ENCODE measurements at regions of chr11 and their contacts with region 1.

Region 1: DNA sequence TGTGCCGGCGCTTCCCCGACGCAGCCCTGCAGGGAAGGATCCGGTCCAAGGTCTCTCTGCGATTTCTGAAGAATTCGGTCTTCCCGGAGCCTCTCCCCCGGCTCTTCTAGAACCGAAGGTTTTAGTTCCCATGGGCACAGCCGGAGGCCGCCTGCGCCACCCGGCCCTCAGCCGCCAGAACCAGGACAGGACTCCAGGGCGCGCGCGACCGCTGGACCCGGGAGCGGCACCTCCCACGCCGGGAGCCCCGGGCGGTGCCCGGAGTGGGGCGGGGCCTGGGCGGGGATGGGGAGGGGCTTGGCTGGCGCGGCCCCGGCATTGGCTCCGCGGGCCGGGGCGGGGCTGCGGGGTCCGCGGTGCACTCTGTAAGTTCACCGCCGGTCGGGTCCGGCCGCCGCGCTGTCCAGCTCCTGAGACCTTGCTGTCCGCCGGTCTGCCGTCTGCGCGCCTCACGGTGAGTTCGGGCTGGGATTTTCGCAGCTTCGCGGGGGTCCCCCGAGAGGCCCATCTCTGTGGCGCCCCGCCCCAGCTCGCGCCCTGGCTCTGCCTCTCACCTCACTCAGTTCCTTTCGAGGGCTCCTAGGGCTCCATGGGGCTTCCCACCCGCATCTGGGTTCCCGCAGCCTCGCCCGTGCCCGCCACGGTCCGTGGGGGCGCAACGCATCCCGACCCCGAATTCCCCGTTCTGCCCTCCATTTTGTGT is at the start of gene CDC42EP2:
- DNase-seq: peak; percentile 63 to 76 (median 74)
- H3K4me3 ChIP-seq: peak within 1 kb of the TSS; percentile 82 to 98 (median 97)
- H3K4me3 Mint-ChIP-seq: peak within 1 kb of the TSS; percentile 86 to 92
- H3K27ac ChIP-seq: peak within 1 kb of the TSS; percentile 40 to 72
- H3K27ac Mint-ChIP-seq: peak within 1 kb of the TSS in 6 of 7 donors; percentile 53 to 89 (median 72)
- H3K4me1 ChIP-seq: peaks cover 37 to 71% of the 10 kb centered on the region in 2 donors
- H3K4me1 Mint-ChIP-seq: peaks cover 50% of the 10 kb centered on the region
- H3K27me3 ChIP-seq: peaks cover 2 to 11% of the 10 kb centered on the region in 2 donors
- H3K27me3 Mint-ChIP-seq: peaks cover 14 to 33% (median 26%) of the 10 kb centered on the region in 3 donors
- CTCF ChIP-seq: no peak
- polyA plus RNA-seq, gene CDC42EP2: 5.4 to 15.6 (median 10.1) TPM

Region 2: DNA sequence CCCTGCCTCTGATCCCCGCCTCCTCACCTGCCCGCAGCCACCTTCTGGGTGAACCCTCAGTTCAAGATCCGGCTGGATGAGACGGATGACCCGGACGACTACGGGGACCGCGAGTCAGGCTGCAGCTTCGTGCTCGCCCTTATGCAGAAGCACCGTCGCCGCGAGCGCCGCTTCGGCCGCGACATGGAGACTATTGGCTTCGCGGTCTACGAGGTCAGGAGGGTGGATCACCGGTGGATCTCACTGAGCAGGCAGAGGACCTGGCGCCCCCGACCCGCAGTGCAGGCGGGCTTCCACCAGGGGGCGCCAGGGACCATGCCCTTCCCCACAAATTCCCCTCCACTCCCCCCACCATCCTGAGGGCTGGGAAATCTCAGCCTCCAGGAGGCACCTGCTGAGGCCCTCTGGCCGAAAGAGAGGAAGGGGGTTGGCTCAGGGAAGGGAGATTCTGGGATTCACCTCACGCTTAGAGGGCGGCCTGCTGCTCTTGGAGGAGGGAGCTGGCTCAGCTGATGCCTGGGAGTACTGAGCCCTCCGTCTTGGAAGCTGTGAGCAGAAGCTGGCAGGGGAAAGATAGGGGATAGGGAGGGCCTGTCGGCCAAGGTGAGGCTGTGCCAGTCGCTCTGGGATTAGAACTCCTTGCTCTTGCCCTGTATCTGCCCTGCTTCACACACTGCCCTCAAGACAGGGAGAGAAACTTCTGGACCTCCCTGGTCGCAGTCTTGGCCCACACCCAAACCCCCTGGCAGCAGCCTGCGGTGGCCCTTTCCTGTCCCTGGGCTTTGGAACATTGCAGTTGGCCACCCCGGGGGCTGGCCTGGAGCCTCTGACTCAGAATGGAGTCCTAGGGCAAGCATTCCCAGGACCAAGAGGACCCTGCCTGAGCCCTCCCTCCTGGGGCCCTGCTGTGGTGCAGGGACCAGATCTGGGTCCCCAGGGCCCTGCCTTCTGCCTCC is 109.7 kb before region 1 on chr11:
- intact Hi-C with region 1: loop called in 1 of 2 experiments (anchors 10 kb)
- DNase-seq: peak in 2 of 3 donors; percentile 27 to 51
- H3K4me3 ChIP-seq: no peak overlapping the region
- H3K4me3 Mint-ChIP-seq: no peak overlapping the region
- H3K27ac ChIP-seq: peak overlapping the region in 1 of 2 donors; percentile 11
- H3K27ac Mint-ChIP-seq: peak overlapping the region in 4 of 7 donors; percentile 19 to 76 (median 60)
- H3K4me1 ChIP-seq: peaks cover 14 to 16% of the 10 kb centered on the region in 2 donors
- H3K4me1 Mint-ChIP-seq: peaks cover 18% of the 10 kb centered on the region
- H3K27me3 ChIP-seq: no peaks in the 10 kb centered on the region
- H3K27me3 Mint-ChIP-seq: no peaks in the 10 kb centered on the region
- CTCF ChIP-seq: peak; percentile 97

Region 3: GRCh38 chr11:65274735-65275682 is 39.6 kb before region 1 on chr11:
- intact Hi-C with region 1: loop called (anchors 1 to 2 kb)
- DNase-seq: peak; percentile 64 to 80 (median 72)
- H3K4me3 ChIP-seq: no peak overlapping the region
- H3K4me3 Mint-ChIP-seq: no peak overlapping the region
- H3K27ac ChIP-seq: no peak overlapping the region
- H3K27ac Mint-ChIP-seq: no peak overlapping the region
- H3K4me1 ChIP-seq: peaks cover 10 to 12% of the 10 kb centered on the region in 2 donors
- H3K4me1 Mint-ChIP-seq: peaks cover 15% of the 10 kb centered on the region
- H3K27me3 ChIP-seq: no peaks in the 10 kb centered on the region
- H3K27me3 Mint-ChIP-seq: peaks cover 0 to 2% (median 1%) of the 10 kb centered on the region in 3 donors
- CTCF ChIP-seq: peak; percentile 93

Region 4: DNA sequence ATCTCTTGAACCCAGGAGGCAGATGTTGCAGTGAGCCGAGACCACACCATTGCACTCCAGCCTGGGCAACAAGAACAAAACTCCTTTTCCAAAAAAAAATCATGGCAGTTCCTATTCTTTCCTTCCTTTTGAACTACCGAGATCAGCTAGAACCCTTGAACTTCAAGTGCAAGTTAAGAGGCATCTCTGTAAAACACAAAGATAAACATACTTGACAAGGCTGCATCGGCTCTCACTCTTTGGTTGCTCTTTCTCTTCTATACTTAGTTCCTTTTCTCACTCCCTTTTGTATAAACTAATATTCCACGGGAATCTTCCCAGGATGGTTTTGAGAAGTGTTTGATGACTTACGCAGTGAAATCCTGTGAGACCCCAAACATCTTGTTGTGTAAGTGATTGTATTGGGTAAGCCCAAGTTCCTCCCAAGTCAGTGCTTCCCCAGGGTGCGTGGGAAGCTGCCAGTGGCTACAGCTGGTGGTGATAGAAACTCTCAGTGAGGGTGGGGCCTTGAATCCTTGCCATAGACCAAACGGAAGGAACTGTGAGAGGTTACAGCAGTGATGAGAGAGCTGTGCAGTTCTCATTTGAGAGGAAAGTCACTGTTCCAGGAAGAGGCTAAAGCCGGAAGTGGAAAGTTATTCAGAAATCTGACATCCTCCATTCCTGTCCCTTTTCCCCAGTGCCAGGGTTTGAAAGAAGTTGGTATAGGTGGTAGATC is 24.0 kb before region 1 on chr11:
- intact Hi-C with region 1: loop called in 1 of 2 experiments (anchors 2 kb)
- DNase-seq: peak; percentile 91 to 100 (median 99)
- H3K4me3 ChIP-seq: peak overlapping the region; percentile 1 to 60 (median 23)
- H3K4me3 Mint-ChIP-seq: peak overlapping the region; percentile 74 to 90
- H3K27ac ChIP-seq: peak overlapping the region; percentile 94 to 96
- H3K27ac Mint-ChIP-seq: peak overlapping the region; percentile 97 to 100 (median 99)
- H3K4me1 ChIP-seq: peaks cover 50% of the 10 kb centered on the region in 2 donors
- H3K4me1 Mint-ChIP-seq: peaks cover 55% of the 10 kb centered on the region
- H3K27me3 ChIP-seq: no peaks in the 10 kb centered on the region
- H3K27me3 Mint-ChIP-seq: peaks cover 0 to 4% (median 0%) of the 10 kb centered on the region in 3 donors
- CTCF ChIP-seq: no peak

Region 5: DNA sequence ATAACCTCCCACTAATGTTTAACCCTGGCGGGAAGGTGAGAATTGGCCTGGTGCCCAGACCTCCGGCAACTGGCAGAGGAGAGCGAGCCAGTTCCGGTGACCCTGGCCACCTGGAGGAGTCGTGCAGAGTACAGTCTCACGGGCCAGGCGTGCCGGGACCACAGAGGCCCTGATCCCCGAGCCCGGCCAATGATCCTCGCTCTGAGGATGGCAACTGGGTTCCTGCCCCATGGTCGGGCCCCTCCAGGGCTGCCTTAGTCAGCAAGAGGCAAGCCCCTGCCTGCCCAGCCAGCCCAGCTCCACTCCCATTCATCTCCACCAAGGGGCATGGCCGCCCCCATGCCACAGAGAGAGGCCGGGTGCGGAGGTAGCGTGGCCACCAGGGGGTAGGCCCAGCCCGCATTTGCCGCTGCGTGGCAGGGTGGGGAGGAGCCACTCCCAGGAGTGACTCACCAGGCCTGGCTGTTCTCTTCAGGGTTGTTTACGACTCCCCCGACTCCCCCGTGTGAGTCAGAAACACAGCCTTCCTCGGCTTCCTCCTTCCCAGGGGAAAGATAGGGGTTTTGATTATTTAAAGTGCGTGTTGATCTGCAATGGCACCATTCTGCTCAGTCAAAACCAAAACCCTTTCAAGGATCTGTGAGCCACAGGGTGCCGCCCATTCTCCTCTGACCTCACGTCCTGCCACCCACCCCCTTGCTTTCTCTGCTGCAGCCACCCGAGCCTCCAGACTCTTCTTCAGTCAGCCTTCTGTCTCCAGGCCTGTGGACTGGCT is 67.6 kb after region 1 on chr11 and contains the start of gene SLC25A45:
- intact Hi-C with region 1: no loop called
- DNase-seq: peak; percentile 96 to 99 (median 98)
- H3K4me3 ChIP-seq: peak within 1 kb of the TSS; percentile 21 to 73 (median 54)
- H3K4me3 Mint-ChIP-seq: peak within 1 kb of the TSS; percentile 89 to 94
- H3K27ac ChIP-seq: peak within 1 kb of the TSS; percentile 89 to 100
- H3K27ac Mint-ChIP-seq: peak within 1 kb of the TSS; percentile 99 to 100 (median 100)
- H3K4me1 ChIP-seq: peaks cover 57 to 75% of the 10 kb centered on the region in 2 donors
- H3K4me1 Mint-ChIP-seq: peaks cover 58% of the 10 kb centered on the region
- H3K27me3 ChIP-seq: no peaks in the 10 kb centered on the region
- H3K27me3 Mint-ChIP-seq: peaks cover 0 to 2% (median 0%) of the 10 kb centered on the region in 3 donors
- CTCF ChIP-seq: peak; percentile 87
- polyA plus RNA-seq, gene SLC25A45: 3.7 to 11.3 (median 4.1) TPM

Measured in CD14-positive monocyte (primary cell).